GM13976 (cell line): ENCODE measurements at regions of chr4 and their contacts with region 1.

Region 1: GRCh38 chr4:142120921-142121320 is 484.5 kb downstream of the IL15 start:
- DNase-seq: no peak
- CTCF ChIP-seq: no peak

Region 2: DNA sequence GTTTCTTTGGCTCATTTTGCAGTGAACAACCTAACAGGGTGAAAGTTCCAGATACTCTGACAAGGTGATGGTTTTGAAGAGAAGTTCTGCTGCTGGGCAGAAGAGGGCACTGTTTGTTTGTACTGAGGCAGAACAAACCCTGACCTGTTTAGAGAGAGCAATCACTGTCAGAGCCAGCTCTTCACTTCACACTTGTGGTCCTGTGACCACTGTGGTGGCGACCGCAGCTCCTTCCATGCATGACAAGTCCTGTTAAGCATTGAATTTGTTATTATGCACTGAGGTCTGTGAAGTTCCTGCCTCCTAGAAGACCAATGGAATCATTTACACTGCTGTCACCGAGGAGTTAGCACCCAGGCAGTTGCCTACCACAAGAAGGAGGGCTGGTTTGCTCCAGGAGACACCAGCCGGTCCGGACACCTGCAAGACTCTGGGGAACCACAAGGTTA is 813.7 kb before region 1 on chr4:
- in situ Hi-C with region 1: loop called (anchors 25 kb)
- DNase-seq: peak; percentile 74
- CTCF ChIP-seq: peak; percentile 79

Region 3: GRCh38 chr4:141922236-141922635 is 198.7 kb before region 1 on chr4:
- in situ Hi-C with region 1: no loop called
- DNase-seq: no peak
- CTCF ChIP-seq: no peak